Activated CD4-positive, alpha-beta memory T cell treated with anti-CD3 and anti-CD28 coated beads, Interleukin-2, amount 10 ng/mL, durations not matched to agents 7 days and 5 days (primary cell): ENCODE measurements at regions of chr6 and their contacts with region 1.

Region 1: GRCh38 chr6:116680975-116681808 is at the start of gene KPNA5:
- DNase-seq: peak; percentile 93
- H3K4me3 Mint-ChIP-seq: peak within 1 kb of the TSS; percentile 97
- H3K27ac Mint-ChIP-seq: peak within 1 kb of the TSS; percentile 98
- H3K4me1 Mint-ChIP-seq: peaks cover 22% of the 10 kb centered on the region
- H3K27me3 Mint-ChIP-seq: no peaks in the 10 kb centered on the region
- total RNA-seq, gene KPNA5: 7.1 to 9.9 TPM

Region 2: DNA sequence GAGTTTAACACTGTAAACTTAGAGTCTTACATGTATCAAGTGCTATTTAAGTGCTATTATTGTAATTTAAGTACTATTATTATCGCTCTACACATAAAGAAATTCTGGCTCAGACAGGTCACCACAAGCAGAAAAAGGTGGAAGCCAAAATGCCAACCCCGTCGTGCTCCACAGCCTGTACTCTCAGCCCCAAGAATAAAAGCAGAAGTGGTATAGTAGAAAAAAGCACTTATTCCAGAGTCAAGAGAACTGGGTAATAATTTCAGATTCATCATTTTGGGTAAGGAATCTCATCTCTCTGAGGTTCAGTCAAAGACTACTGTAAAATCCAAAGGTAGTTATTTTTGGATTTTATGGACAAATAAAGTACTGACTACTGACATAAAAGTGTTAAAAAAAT is 13.6 kb before region 1 on chr6:
- CTCF ChIA-PET with region 1: interaction called, 6 read pairs
- POLR2A ChIA-PET with region 1: interaction called, 38 read pairs
- DNase-seq: no peak
- H3K4me3 Mint-ChIP-seq: peak overlapping the region; percentile 91
- H3K27ac Mint-ChIP-seq: peak overlapping the region; percentile 90
- H3K4me1 Mint-ChIP-seq: peaks cover 42% of the 10 kb centered on the region
- H3K27me3 Mint-ChIP-seq: peaks cover 15% of the 10 kb centered on the region

Region 3: GRCh38 chr6:117629119-117629518 is 947.9 kb after region 1 on chr6:
- CTCF ChIA-PET with region 1: no interaction called
- POLR2A ChIA-PET with region 1: no interaction called
- DNase-seq: no peak
- H3K4me3 Mint-ChIP-seq: no peak overlapping the region
- H3K27ac Mint-ChIP-seq: no peak overlapping the region
- H3K4me1 Mint-ChIP-seq: no peaks in the 10 kb centered on the region
- H3K27me3 Mint-ChIP-seq: peaks cover 4% of the 10 kb centered on the region